Activated CD4-positive, alpha-beta memory T cell treated with anti-CD3 and anti-CD28 coated beads for 36 hours (primary cell): ENCODE measurements at regions of chr3 and their contacts with region 1.

Region 1: DNA sequence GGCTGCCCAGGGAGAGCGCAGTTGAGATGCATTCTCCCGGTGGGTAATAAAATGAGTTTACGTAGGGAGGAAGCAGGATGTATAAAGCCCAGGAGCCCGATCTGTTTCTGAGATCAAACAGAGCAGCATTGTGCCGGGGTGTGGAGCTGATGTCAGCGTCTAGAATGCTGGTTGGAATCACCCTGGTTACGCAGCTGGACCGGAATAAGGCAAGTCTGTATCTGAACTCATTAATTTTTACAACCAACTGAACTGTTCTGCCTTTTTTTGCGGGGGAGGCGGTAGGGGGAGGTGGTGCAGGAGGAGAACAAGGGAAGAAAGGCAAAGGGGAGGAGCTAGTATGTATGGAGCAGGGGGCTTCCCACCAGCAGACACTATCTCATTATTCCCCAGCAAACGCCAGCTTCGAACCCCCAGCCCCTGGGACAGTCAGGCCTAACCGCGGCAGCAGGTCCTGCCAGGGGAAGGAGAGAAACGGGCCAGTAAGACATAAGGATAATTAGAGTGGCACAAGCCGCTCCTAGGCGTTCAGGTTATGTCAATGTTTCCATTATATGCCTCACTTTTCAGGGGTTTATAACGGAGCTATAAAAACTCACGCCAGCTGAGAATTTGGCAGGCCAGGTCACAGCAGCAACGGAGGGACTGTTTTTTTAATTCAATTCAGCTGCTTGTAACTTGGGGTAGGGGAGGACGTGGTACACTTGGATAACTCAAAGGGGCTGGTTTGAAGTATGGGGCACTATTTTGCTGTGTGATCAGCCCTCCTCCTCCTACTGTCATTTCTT is 175.3 kb upstream of the HES1 start:
- DNase-seq: no peak
- H3K4me3 Mint-ChIP-seq: no peak overlapping the region
- H3K27ac Mint-ChIP-seq: no peak overlapping the region
- H3K4me1 Mint-ChIP-seq: peaks cover 26% of the 10 kb centered on the region
- H3K27me3 Mint-ChIP-seq: peaks cover 45% of the 10 kb centered on the region

Region 2: DNA sequence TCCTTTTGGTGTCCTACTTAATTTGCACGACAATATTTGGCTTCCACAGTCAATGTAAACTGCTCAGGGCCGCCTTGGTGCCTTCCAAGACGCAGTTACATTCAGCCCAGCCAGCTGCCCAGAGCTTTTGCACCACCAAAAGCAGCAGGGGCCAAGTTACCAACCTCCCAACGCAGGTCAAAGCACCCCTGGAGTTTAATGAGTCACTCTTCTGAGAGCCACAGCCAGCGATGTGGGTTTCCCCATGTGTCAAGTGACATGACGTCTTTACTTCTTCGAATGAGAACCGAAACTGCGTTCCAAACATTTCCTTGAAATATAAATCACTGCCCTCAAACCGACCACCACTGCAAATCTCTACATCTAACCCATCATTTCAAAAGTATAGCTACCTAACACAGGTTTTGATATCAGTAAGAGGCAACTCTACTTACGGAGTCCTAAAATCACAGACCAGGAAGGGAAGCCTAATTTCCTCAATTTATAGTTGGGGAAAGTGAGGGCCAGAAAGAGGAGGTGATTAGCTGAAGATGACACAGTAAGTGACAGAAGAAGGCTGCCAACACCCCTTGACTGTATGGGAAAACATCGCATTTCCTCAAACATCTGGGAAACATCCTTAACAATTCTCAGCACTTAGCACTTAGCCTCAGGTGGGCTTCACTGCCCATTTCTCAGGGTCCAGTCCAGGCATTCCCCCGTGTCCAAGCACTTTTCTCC is 1067.5 kb before region 1 on chr3:
- CTCF ChIA-PET with region 1: no interaction called
- POLR2A ChIA-PET with region 1: no interaction called
- intact Hi-C with region 1: loop called (anchors 10 kb)
- DNase-seq: peak; percentile 86
- H3K4me3 Mint-ChIP-seq: peak overlapping the region; percentile 24
- H3K27ac Mint-ChIP-seq: peak overlapping the region; percentile 80
- H3K4me1 Mint-ChIP-seq: peaks cover 82% of the 10 kb centered on the region
- H3K27me3 Mint-ChIP-seq: peaks cover 12% of the 10 kb centered on the region

Region 3: GRCh38 chr3:193897288-193897687 is 63.4 kb before region 1 on chr3:
- CTCF ChIA-PET with region 1: no interaction called
- POLR2A ChIA-PET with region 1: no interaction called
- intact Hi-C with region 1: no loop called
- DNase-seq: no peak
- H3K4me3 Mint-ChIP-seq: no peak overlapping the region
- H3K27ac Mint-ChIP-seq: no peak overlapping the region
- H3K4me1 Mint-ChIP-seq: no peaks in the 10 kb centered on the region
- H3K27me3 Mint-ChIP-seq: peaks cover 1% of the 10 kb centered on the region

Region 4: DNA sequence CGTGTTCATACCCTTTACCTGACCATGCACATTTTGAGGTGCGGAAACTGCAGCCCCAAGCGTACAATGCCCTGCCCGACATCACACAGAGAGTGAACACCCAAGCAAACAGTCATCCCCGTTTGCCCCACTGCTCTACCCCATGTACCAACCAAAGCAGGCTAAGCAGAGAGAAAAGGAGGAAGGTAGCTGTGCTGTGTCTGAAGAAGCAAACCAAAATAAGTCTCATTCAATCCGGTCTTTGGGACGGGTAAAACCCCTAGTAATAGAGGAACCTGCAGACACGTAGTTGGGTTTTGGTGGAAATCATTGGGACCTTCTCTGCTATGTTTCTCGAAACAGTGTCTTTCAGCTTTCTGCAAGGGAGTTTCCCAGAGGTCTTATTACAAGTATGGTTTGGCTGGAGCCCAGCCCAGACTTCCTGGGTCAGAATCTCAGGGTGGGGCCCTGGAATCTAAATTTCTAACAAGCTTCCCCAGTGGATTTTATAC is 10.6 kb after region 1 on chr3:
- CTCF ChIA-PET with region 1: interaction called, 7 read pairs
- POLR2A ChIA-PET with region 1: no interaction called
- intact Hi-C with region 1: loop called (anchors 1 kb)
- DNase-seq: peak; percentile 30
- H3K4me3 Mint-ChIP-seq: no peak overlapping the region
- H3K27ac Mint-ChIP-seq: peak overlapping the region; percentile 56
- H3K4me1 Mint-ChIP-seq: peaks cover 18% of the 10 kb centered on the region
- H3K27me3 Mint-ChIP-seq: peaks cover 41% of the 10 kb centered on the region

Region 5: DNA sequence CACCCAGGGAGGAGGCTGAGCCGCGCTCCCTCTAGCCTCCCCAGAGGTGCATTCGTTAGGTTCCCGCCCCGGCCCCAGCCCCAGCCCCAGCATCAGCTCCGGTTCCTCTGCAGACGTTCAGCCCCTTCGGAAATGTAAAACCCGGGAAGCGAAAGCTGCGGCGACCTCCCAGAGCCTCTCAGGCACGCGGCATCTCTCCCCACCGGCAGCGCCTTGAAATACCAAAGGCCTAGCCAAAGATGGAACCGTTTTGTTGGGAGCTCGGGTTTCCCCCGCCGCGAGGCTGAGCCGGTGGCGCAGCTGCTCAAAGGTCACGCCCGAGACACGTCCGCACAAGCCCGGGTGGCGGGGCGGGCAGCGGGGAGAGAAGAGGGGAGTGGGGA is 97.5 kb after region 1 on chr3:
- CTCF ChIA-PET with region 1: no interaction called
- POLR2A ChIA-PET with region 1: no interaction called
- intact Hi-C with region 1: no loop called
- DNase-seq: peak; percentile 51
- H3K4me3 Mint-ChIP-seq: peak overlapping the region; percentile 36
- H3K27ac Mint-ChIP-seq: no peak overlapping the region
- H3K4me1 Mint-ChIP-seq: peaks cover 7% of the 10 kb centered on the region
- H3K27me3 Mint-ChIP-seq: peaks cover 24% of the 10 kb centered on the region

Region 6: GRCh38 chr3:194306109-194306686 is 345.5 kb after region 1 on chr3:
- CTCF ChIA-PET with region 1: no interaction called
- POLR2A ChIA-PET with region 1: no interaction called
- intact Hi-C with region 1: loop called (anchors 1 kb)
- DNase-seq: peak; percentile 77
- H3K4me3 Mint-ChIP-seq: peak overlapping the region; percentile 30
- H3K27ac Mint-ChIP-seq: peak overlapping the region; percentile 85
- H3K4me1 Mint-ChIP-seq: peaks cover 38% of the 10 kb centered on the region
- H3K27me3 Mint-ChIP-seq: peaks cover 2% of the 10 kb centered on the region

Region 7: GRCh38 chr3:194521514-194522260 is 561.0 kb after region 1 on chr3:
- CTCF ChIA-PET with region 1: no interaction called
- POLR2A ChIA-PET with region 1: no interaction called
- intact Hi-C with region 1: loop called (anchors 5 kb)
- DNase-seq: no peak
- H3K4me3 Mint-ChIP-seq: no peak overlapping the region
- H3K27ac Mint-ChIP-seq: no peak overlapping the region
- H3K4me1 Mint-ChIP-seq: peaks cover 41% of the 10 kb centered on the region
- H3K27me3 Mint-ChIP-seq: peaks cover 35% of the 10 kb centered on the region